A673 (cell line): ENCODE measurements at regions of chr14 and their contacts with region 1.

Region 1: DNA sequence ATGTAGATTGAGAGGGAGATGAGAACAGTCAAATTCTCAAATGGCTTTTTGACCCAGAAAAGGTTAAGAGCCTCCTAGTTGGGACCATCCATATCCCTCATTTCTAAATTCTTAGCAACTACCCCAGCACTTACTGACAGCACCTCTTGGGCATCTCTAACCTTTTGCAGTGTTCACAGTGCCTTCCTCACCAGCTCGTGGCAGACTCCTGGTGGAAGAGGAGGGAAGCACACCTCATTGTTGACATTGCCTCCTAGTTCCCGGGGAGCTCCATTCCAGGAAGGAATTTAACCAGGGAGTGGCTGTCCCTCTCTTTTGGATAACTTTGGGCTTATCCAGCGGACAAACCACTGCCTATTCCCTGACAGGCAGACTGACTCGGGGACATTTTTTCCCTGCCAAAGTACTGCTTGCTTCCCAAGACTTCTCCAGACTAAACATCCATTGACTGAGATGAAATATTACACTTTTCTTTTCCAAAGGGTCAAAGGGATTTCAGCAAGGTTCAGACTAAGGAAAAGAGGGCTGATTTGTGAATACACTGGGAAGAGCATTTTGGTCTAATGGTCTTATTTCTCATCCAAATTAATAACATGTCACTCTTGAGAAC is 9.0 kb upstream of the OR6J1 start:
- DNase-seq: peak; percentile 80
- H3K4me3 ChIP-seq: no peak overlapping the region
- H3K27ac ChIP-seq: no peak overlapping the region
- H3K4me1 ChIP-seq: peaks cover 14% of the 10 kb centered on the region
- H3K27me3 ChIP-seq: no peaks in the 10 kb centered on the region
- CTCF ChIP-seq: peak; percentile 89

Region 2: GRCh38 chr14:22226381-22226780 is 426.7 kb before region 1 on chr14:
- CTCF ChIA-PET with region 1: no interaction called
- POLR2A ChIA-PET with region 1: no interaction called
- intact Hi-C with region 1: no loop called
- DNase-seq: peak; percentile 77
- H3K4me3 ChIP-seq: no peak overlapping the region
- H3K27ac ChIP-seq: no peak overlapping the region
- H3K4me1 ChIP-seq: peaks cover 10% of the 10 kb centered on the region
- H3K27me3 ChIP-seq: no peaks in the 10 kb centered on the region
- CTCF ChIP-seq: peak; percentile 75

Region 3: DNA sequence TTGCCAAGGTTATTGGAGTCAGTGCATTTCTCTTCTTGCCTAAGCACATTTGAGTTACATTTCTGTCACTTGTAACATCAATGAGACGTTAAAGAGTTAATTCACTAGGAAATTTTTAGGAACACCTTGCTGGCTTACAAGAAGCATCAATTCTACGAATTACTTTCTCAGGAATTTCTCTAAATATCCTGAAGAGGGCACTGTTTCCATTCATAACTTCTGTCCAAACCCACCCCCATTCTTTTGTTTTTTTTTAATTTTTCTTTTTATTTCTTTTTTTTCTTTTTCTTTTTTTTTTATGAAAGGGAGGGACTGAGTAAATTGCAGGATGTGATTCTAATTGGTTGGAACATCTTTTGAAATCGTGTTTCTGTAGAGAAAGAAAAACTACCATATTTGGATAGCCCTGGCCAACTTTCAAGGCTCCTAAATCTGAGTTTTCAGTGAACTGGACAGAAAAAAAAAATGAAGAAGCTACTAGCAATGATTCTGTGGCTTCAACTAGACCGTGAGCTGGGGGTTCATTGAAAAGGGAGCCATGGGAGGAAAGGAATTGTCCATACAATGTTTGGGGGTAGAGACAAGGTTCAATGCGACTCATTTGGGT is 349.4 kb before region 1 on chr14:
- CTCF ChIA-PET with region 1: no interaction called
- POLR2A ChIA-PET with region 1: no interaction called
- intact Hi-C with region 1: loop called (anchors 10 kb)
- DNase-seq: peak; percentile 63
- H3K4me3 ChIP-seq: peak overlapping the region; percentile 15
- H3K27ac ChIP-seq: peak overlapping the region; percentile 78
- H3K4me1 ChIP-seq: peaks cover 29% of the 10 kb centered on the region
- H3K27me3 ChIP-seq: no peaks in the 10 kb centered on the region
- CTCF ChIP-seq: peak; percentile 74

Region 4: GRCh38 chr14:22622255-22622654 is 30.9 kb before region 1 on chr14:
- CTCF ChIA-PET with region 1: no interaction called
- POLR2A ChIA-PET with region 1: no interaction called
- intact Hi-C with region 1: no loop called
- DNase-seq: no peak
- H3K4me3 ChIP-seq: no peak overlapping the region
- H3K27ac ChIP-seq: no peak overlapping the region
- H3K4me1 ChIP-seq: no peaks in the 10 kb centered on the region
- H3K27me3 ChIP-seq: no peaks in the 10 kb centered on the region
- CTCF ChIP-seq: no peak